Sciatic nerve (tissue), 2 donors: ENCODE measurements at regions of chr16 and their contacts with region 1.

Region 1: DNA sequence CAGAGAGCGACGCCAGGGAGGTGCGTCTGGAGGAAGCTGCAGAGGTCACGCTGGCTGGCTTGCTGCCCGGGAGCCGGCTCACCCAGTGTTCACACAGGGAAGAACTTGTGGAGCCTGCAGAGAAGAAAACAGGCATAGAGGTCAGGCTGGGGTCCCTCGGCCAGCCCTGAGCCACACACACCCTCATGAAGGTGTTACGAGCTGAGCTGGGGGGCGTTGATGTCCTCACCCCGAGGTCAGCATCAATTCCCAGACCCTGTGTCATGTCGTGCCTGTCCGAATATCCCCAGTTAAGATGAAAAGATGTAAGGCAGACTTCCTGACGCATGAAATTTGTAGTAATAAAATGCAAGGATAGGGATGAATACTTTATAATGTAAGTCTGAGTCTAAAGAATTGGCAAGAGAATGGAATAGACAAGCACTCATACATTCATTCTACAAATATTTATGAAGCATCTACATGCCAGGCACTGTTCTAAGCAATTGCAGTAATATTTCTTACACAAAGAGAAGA is 77.1 kb downstream of the USP31 start:
- DNase-seq: peak; percentile 85
- ATAC-seq: peak; percentile 90

Region 2: GRCh38 chr16:23428351-23428750 is 356.2 kb after region 1 on chr16:
- intact Hi-C with region 1: loop called (anchors 5 kb)
- DNase-seq: no peak
- ATAC-seq: no peak